Dorsolateral prefrontal cortex (tissue), 120 donors: ENCODE measurements at regions of chr6 and their contacts with region 1.

Region 1: DNA sequence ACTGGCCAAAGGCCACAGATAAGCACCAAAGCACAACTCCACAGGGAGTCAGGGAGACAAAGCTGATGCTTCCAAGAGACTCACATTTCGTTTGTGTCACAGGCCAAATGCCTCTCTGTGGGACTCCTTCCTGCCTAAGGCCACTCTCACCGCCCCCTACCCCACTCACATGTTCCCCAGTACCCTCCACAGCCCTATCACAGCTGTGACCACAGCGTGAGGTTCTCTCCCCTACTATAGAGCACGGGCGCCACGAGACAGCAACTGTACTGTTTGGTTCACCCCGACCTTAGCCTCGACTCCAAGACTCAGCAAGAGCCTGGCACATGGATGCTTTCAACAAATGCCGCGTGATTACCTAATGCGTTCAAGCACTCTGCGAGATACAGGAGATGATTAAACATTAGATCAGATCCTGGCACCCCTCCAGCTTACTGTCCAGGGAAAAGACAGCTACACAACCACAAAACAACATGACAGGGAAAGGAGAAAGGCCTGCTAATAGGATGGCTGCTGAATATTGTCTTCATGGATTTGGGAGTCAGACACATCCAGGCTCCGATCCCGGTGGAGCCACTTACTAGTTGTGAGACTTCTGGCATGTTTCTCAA is 105.5 kb downstream of the AGPAT4 start:
- DNase-seq: peak in 4 of 10 donors; percentile 41 to 77 (median 64)
- H3K4me3 ChIP-seq: no peak overlapping the region
- H3K27ac ChIP-seq: peak overlapping the region; percentile 8 to 86 (median 72)
- H3K27me3 ChIP-seq: no peaks in the 10 kb centered on the region
- CTCF ChIP-seq: no peak

Region 2: DNA sequence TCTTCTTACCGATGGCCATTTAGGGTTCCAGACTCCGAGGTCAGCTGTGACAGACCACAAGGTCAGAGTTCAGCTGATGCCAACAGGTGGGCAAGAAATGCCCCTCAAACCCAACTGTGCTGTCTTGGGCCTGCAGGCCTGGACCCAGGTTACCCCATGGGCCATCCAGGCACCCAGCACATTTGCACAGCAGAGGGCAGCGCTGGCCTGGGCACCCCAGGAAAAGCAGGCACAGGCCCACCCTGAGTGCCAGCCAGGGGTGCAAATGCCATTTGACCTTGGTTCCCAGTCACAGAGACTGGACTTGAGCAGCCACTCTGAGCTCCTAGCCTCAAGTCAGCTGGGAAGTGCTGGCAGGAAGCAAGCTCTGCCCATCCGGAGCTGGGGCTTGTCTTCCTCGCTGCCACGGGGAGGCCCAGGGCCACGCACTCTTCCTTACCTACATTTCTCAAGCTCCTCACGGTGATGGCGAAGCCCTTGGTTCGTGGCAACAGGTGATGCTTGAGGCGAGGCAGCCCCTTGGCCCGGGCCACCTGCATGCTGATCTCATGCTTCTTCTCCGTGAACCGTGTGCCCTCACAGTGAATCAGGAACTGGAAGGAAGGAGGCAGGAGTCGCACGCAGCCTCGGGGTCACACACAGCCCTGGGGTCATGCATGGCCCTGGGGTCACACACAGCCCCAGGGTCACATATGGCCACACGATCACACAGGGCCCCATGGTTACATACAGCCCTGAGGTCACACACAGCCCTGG is 15.3 kb before region 1 on chr6:
- intact Hi-C with region 1: no loop called
- DNase-seq: no peak
- H3K4me3 ChIP-seq: no peak overlapping the region
- H3K27ac ChIP-seq: peak overlapping the region in 17 of 59 donors; percentile 4 to 70 (median 46)
- H3K27me3 ChIP-seq: no peaks in the 10 kb centered on the region
- CTCF ChIP-seq: peak in 47 of 56 donors; percentile 18 to 65 (median 46)

Region 3: GRCh38 chr6:161228921-161229591 is 60.7 kb after region 1 on chr6:
- intact Hi-C with region 1: loop called in 1 of 2 experiments (anchors 5 kb)
- DNase-seq: peak in 1 of 10 donors; percentile 47
- H3K4me3 ChIP-seq: peak overlapping the region in 50 of 59 donors; percentile 3 to 53 (median 21)
- H3K27ac ChIP-seq: peak overlapping the region; percentile 22 to 93 (median 85)
- H3K27me3 ChIP-seq: no peaks in the 10 kb centered on the region
- CTCF ChIP-seq: peak in 3 of 56 donors; percentile 9 to 13 (median 11)

Region 4: DNA sequence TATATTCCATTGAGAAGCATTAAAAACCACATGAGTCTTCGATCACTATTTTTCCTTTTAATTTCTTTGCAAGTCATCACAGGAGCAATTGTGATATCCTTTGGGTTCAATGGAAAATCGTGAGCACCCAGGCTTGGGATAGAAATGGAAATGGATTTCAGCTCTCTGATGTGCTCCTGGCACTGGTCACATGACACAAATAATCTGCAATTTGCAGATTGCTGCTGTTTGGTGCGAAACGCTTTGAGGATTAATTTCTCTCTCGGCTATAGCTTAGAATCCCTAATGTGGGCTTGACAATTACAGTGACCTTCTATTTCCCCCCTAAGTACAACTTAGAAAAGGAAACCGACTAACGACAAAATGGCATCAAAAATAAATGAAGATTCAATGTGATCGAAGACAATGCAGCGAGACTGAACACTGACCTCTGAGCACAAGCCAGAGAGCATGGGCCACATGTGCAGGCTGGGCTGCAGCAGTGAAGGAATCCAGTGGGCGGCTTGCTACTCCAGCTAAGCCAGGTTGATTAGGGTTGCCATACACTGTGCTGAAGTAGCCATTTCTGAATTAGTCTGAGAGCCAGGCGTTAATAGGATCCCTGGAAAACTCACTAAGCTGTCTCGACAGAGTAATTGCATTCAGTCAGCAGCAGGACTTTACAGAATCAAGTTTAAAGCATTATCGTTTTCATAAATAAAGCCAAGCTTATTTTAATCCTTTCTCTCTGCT is 407.3 kb after region 1 on chr6:
- intact Hi-C with region 1: no loop called
- DNase-seq: no peak
- H3K4me3 ChIP-seq: peak overlapping the region in 27 of 59 donors; percentile 1 to 53 (median 22)
- H3K27ac ChIP-seq: peak overlapping the region in 3 of 59 donors; percentile 12 to 17 (median 15)
- H3K27me3 ChIP-seq: no peaks in the 10 kb centered on the region
- CTCF ChIP-seq: no peak